Left ventricle myocardium inferior (tissue), 1 donor: ENCODE measurements at regions of chr3 and their contacts with region 1.

Region 1: GRCh38 chr3:39497753-39498152 is 30.3 kb downstream of the MOBP start:
- DNase-seq: no peak
- H3K4me3 ChIP-seq: no peak overlapping the region
- H3K27ac ChIP-seq: no peak overlapping the region
- H3K4me1 ChIP-seq: peaks cover 8% of the 10 kb centered on the region
- H3K27me3 ChIP-seq: peaks cover 78% of the 10 kb centered on the region
- CTCF ChIP-seq: no peak

Region 2: GRCh38 chr3:39414421-39414907 is 83.3 kb before region 1 on chr3:
- intact Hi-C with region 1: loop called (anchors 1 kb)
- DNase-seq: no peak
- H3K4me3 ChIP-seq: no peak overlapping the region
- H3K27ac ChIP-seq: peak overlapping the region; percentile 57
- H3K4me1 ChIP-seq: peaks cover 34% of the 10 kb centered on the region
- H3K27me3 ChIP-seq: no peaks in the 10 kb centered on the region
- CTCF ChIP-seq: no peak